ENCODE measurements at regions of chr5 and their contacts with region 1.

Region 1: DNA sequence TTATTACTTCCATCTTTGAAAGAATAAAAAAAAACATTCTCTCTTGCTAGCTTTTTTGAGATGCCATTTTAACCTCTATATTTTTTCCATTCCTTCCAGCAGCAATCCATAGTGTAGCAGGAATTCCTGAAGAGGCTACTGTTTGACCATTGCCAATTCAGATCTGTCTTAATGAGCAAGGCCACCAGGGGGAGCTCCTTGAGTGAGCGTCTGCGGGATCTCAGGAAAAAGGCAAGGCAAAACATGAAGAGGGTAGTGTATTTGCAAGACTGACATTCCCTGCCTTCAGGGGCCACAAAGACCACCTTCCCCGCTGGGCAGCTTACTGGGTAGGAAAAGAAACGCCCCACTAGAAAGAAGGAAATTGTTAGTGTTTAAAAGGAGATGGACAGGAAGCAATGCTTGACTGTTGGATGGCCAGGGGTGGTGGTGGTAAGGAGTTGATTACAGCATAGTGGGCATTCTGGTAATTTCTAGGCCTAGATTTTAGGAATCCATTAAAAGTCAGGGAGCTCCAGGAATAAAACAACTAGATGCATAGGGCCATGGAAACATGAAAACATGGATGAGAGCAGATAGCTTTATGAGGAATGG is 206.6 kb upstream of the HAPLN1 start:
- DNase-seq: peak; percentile 44
- ATAC-seq: no peak
- H3K4me3 Mint-ChIP-seq: no peak overlapping the region
- H3K27ac Mint-ChIP-seq: no peak overlapping the region
- H3K4me1 Mint-ChIP-seq: no peaks in the 10 kb centered on the region
- H3K27me3 Mint-ChIP-seq: no peaks in the 10 kb centered on the region
- CTCF ChIP-seq: peak; percentile 75

Region 2: GRCh38 chr5:83914199-83914598 is 13.0 kb before region 1 on chr5:
- CTCF ChIA-PET with region 1: interaction called, 12 read pairs
- POLR2A ChIA-PET with region 1: no interaction called
- intact Hi-C with region 1: no loop called
- DNase-seq: no peak
- ATAC-seq: no peak
- H3K4me3 Mint-ChIP-seq: no peak overlapping the region
- H3K27ac Mint-ChIP-seq: no peak overlapping the region
- H3K4me1 Mint-ChIP-seq: no peaks in the 10 kb centered on the region
- H3K27me3 Mint-ChIP-seq: no peaks in the 10 kb centered on the region
- CTCF ChIP-seq: no peak

Region 3: DNA sequence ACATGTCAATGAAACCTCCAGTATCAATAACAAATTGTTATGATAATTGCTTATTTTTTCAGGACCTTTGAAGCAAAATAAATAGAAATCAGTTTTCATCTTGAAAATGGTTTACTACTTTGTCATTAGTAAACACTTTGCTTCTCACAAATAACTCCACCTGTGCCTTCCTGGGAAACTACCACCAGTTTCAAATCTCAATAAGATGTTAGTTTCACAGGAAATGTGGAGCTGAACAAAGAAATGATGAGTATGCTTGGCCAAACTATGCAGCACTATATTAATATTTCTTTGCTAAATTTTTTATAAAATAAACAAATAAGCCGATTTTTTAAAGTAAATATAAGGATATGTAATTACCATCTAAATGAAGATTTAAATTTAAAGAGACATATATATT is 14.9 kb after region 1 on chr5:
- CTCF ChIA-PET with region 1: interaction called, 12 read pairs
- POLR2A ChIA-PET with region 1: no interaction called
- intact Hi-C with region 1: no loop called
- DNase-seq: no peak
- ATAC-seq: no peak
- H3K4me3 Mint-ChIP-seq: no peak overlapping the region
- H3K27ac Mint-ChIP-seq: no peak overlapping the region
- H3K4me1 Mint-ChIP-seq: no peaks in the 10 kb centered on the region
- H3K27me3 Mint-ChIP-seq: no peaks in the 10 kb centered on the region
- CTCF ChIP-seq: no peak

Region 4: DNA sequence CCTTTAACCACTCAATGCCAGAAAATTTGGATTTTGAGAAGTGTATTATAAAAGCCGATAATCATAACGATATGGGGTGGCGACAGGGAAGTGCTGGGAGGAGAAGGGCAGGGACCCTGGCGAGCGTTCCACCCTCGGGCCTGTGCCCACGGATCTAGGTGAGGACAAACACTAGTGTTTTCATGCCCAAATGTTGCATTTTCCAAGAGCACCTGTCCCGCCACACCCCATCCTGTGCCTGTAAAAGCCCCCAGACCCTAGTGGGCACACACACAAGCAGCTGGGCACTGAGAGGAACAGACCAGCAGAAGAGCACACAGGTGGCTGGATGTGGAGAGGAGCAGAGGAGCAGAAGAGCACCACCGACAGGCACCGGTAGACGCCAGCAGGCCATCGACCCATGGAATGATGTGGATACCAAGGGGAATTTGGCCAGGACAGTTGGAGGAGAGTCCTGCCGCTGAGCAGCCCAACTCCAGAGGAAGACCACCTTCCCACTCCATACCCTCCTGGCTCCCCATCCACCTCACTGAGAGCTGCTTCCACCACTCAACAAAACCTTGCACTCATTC is 142.5 kb after region 1 on chr5:
- CTCF ChIA-PET with region 1: no interaction called
- POLR2A ChIA-PET with region 1: no interaction called
- intact Hi-C with region 1: no loop called
- DNase-seq: no peak
- ATAC-seq: no peak
- H3K4me3 Mint-ChIP-seq: no peak overlapping the region
- H3K27ac Mint-ChIP-seq: no peak overlapping the region
- H3K4me1 Mint-ChIP-seq: no peaks in the 10 kb centered on the region
- H3K27me3 Mint-ChIP-seq: no peaks in the 10 kb centered on the region
- CTCF ChIP-seq: no peak